RWPE1 (cell line): ENCODE measurements at regions of chr20 and their contacts with region 1.

Region 1: GRCh38 chr20:34083137-34083536 is 28.9 kb downstream of the EIF2S2 start:
- DNase-seq: peak; percentile 96
- H3K27ac ChIP-seq: peak overlapping the region; percentile 71
- CTCF ChIP-seq: peak; percentile 71

Region 2: GRCh38 chr20:34069341-34070078 is 13.6 kb before region 1 on chr20:
- CTCF ChIA-PET with region 1: interaction called, 11 read pairs
- POLR2A ChIA-PET with region 1: no interaction called
- DNase-seq: peak; percentile 85
- H3K27ac ChIP-seq: no peak overlapping the region
- CTCF ChIP-seq: peak; percentile 94

Region 3: GRCh38 chr20:34111702-34112599 is 28.8 kb after region 1 on chr20 and contains the start of gene EIF2S2:
- CTCF ChIA-PET with region 1: interaction called, 10 read pairs
- POLR2A ChIA-PET with region 1: interaction called, 4 read pairs
- DNase-seq: peak; percentile 99
- H3K27ac ChIP-seq: peak within 1 kb of the TSS; percentile 93
- CTCF ChIP-seq: no peak